Endothelial cell of umbilical vein (primary cell): ENCODE measurements at regions of chr17 and their contacts with region 1.

Region 1: GRCh38 chr17:2336215-2336851 is at the start of gene TSR1:
- DNase-seq: peak; percentile 92
- H3K4me3 ChIP-seq: peak within 1 kb of the TSS; percentile 56 to 85 (median 72)
- H3K27ac ChIP-seq: peak within 1 kb of the TSS; percentile 26
- H3K4me1 ChIP-seq: peaks cover 16% of the 10 kb centered on the region
- H3K27me3 ChIP-seq: no peaks in the 10 kb centered on the region
- CTCF ChIP-seq: peak in 1 of 2 donors; percentile 30
- POLR2A ChIP-seq: peak; percentile 95
- total RNA-seq, gene TSR1: 35.0 and 39.9 TPM in 2 replicates

Region 2: DNA sequence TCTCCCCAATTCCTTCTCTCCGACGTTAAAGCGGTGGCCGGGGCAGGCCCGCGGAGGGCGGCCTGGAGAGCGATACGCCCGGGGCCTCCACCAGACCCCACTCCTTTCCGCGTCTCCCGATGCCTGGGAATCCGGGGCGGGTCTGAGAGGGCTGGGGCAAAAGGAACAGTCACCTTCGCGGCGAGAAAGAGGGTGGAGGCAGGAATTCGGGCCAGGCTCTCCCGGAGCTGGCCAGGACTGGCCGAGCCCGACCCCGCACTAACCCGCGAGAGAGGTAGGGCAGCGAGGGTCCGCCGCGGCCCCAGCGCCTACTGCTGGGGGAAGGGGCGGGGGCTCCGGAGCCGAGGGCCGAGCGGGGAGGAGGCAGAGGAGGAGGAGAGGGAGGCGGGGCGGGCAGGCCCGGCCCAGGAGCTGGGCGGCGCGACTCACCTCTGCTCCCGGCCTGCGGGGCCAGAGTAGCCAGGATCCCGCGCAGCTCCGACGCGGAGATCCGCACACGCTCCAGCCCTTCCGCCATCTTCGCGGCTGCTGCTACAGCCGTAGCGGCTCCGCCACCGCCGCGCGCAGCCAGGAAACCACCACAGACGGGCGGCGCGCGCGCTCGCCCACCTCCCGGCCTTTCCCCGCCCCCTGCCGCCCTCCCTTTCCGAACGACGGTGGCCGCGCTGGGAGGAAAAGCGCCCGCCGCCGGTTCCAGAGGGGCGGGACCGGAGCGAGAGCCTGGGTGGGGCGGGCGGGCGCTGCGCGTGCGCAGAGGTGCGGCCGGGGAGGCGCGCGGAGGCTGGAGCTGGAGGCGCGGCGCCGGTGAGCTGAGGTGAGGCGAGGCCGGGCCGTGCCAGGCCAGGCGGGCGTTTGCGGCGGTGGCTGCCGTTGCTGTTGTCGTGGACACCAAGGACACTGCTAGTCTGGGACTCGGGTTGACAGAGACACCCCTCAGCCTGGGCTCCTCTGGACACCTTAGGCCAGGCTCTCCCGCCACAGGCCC is 32.8 kb before region 1 on chr17 and contains the starts of genes SMG6 and SRR:
- CTCF ChIA-PET with region 1: interaction called, 3 read pairs
- POLR2A ChIA-PET with region 1: interaction called, 3 read pairs
- dilution Hi-C with region 1: no loop called
- intact Hi-C with region 1: loop called (anchors 1 kb)
- DNase-seq: peak; percentile 88
- H3K4me3 ChIP-seq: peak within 1 kb of the TSS; percentile 70 to 99 (median 98)
- H3K27ac ChIP-seq: peak within 1 kb of the TSS; percentile 69
- H3K4me1 ChIP-seq: peaks cover 7% of the 10 kb centered on the region
- H3K27me3 ChIP-seq: no peaks in the 10 kb centered on the region
- CTCF ChIP-seq: no peak
- POLR2A ChIP-seq: peak; percentile 83
- total RNA-seq, gene SMG6: 42.2 and 43.0 TPM in 2 replicates
- total RNA-seq, gene SRR: 19.4 and 20.1 TPM in 2 replicates

Region 3: GRCh38 chr17:2347547-2348307 is 11.4 kb after region 1 on chr17:
- CTCF ChIA-PET with region 1: interaction called, 42 read pairs
- POLR2A ChIA-PET with region 1: interaction called, 4 read pairs
- dilution Hi-C with region 1: no loop called
- intact Hi-C with region 1: no loop called
- DNase-seq: no peak
- H3K4me3 ChIP-seq: no peak overlapping the region
- H3K27ac ChIP-seq: no peak overlapping the region
- H3K4me1 ChIP-seq: no peaks in the 10 kb centered on the region
- H3K27me3 ChIP-seq: no peaks in the 10 kb centered on the region
- CTCF ChIP-seq: no peak
- POLR2A ChIP-seq: no peak

Region 4: GRCh38 chr17:2363851-2364762 is 27.8 kb after region 1 on chr17:
- CTCF ChIA-PET with region 1: interaction called, 6 read pairs
- POLR2A ChIA-PET with region 1: interaction called, 5 read pairs
- dilution Hi-C with region 1: no loop called
- intact Hi-C with region 1: loop called (anchors 1 kb)
- DNase-seq: no peak
- H3K4me3 ChIP-seq: no peak overlapping the region
- H3K27ac ChIP-seq: no peak overlapping the region
- H3K4me1 ChIP-seq: peaks cover 17% of the 10 kb centered on the region
- H3K27me3 ChIP-seq: no peaks in the 10 kb centered on the region
- CTCF ChIP-seq: no peak
- POLR2A ChIP-seq: no peak

Region 5: GRCh38 chr17:2401426-2402221 is 65.3 kb after region 1 on chr17:
- CTCF ChIA-PET with region 1: no interaction called
- POLR2A ChIA-PET with region 1: interaction called, 3 read pairs
- dilution Hi-C with region 1: no loop called
- intact Hi-C with region 1: loop called (anchors 5 kb)
- DNase-seq: peak; percentile 100
- H3K4me3 ChIP-seq: peak overlapping the region; percentile 11 to 69 (median 51)
- H3K27ac ChIP-seq: peak overlapping the region; percentile 99
- H3K4me1 ChIP-seq: peaks cover 43% of the 10 kb centered on the region
- H3K27me3 ChIP-seq: no peaks in the 10 kb centered on the region
- CTCF ChIP-seq: no peak
- POLR2A ChIP-seq: no peak